GM13976 (cell line): ENCODE measurements at regions of chr2 and their contacts with region 1.

Region 1: GRCh38 chr2:85813982-85814801 is 60.4 kb downstream of the ATOH8 start:
- DNase-seq: peak; percentile 90
- CTCF ChIP-seq: peak; percentile 86

Region 2: DNA sequence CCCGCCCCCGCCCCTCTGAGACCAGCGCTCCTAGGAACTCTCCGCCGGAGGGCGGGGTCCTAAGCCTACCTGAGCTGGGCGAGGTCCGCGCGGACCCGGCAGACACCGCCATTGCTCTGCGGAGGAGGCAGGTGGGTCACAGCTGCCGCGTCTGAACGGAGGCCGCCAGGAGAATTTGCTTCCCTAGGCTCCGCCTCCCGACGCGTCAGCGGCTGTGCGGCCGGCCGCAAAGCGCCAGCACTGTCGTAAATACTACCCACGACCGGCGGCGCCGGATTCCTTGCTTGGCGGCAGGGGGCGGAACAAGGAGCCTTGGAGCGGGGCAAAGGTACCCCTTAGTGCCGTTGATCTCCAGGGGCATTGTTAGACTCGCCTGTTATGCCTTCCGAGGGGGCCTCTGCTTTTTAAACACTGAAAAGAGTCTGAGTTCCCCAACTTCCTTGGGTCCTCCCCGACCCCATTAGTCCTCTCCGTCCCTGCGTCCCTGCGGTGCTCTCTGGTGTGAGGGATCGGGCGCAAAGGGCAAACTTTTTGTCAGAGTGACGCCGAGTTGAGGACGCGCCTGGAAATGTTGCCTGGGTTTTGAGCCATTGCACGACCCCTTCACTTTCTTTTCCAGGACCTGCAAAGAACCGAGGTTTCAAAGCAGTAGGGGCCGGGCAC is 252.7 kb before region 1 on chr2 and contains the start of gene GGCX:
- in situ Hi-C with region 1: no loop called
- DNase-seq: peak; percentile 96
- CTCF ChIP-seq: no peak

Region 3: GRCh38 chr2:85619617-85620016 is 194.6 kb before region 1 on chr2:
- in situ Hi-C with region 1: no loop called
- DNase-seq: no peak
- CTCF ChIP-seq: no peak

Region 4: GRCh38 chr2:85737481-85737880 is 76.7 kb before region 1 on chr2:
- in situ Hi-C with region 1: loop called (anchors 5 kb)
- DNase-seq: no peak
- CTCF ChIP-seq: no peak

Region 5: DNA sequence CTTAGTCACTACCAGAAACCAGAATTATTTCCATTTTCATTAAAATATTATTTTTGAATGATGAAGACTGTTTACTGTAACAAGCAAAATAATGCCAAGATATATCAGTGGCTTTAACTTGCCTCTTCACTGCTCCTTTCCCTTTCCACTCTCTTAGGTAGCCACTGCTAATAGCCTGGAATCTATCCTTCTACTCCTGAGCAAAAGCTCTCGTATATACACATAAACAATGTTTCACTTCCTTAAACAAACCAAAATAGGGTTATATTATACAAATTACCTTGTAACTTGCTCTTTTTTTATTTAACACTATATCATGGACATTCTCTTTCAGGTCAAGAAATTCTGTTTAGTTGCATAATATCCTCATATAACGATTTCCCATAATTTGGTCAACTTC is 360.3 kb after region 1 on chr2:
- in situ Hi-C with region 1: no loop called
- DNase-seq: no peak
- CTCF ChIP-seq: no peak

Region 6: GRCh38 chr2:86314125-86314524 is 499.9 kb after region 1 on chr2:
- in situ Hi-C with region 1: no loop called
- DNase-seq: no peak
- CTCF ChIP-seq: no peak